H1 (cell line): ENCODE measurements at regions of chr3 and their contacts with region 1.

Region 1: DNA sequence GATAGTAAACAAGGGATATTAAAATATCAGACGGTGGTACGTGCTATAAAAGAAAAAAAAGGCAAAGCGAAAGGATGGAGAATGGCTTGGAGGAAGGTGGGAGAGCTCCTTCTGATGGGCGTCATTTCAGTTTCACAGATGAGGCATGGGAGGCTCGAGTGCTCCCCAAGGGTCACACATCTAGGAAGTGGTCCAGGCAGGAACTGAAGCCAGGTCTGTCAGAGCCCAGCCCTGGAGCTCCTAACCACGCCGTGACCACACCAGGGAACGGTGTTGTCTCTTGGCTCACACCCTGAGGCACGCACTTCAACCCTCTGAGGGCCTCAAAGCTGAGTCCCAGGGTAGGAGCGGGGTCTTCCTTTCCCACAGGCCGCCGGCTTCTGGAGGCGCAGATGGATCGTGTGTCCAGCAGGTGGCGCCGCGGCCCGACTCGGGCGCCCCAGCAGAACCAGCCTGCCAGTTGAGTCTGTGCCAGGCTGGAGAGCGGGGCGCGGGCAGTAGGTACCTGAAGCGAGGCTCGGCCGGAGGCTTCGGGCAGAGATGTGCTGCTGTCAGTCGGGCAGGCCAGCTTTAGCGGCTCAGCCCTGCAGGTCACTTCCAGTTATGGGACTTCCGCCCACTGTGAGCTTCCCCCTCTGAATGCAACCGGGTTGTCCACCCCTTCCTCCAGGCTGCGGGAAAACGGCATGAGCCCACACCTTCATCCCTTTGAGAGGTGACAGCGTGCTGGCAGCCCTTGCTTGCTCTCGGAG is 68.1 kb downstream of the SLC6A1 start:
- DNase-seq: peak in 1 of 2 experiments; percentile 89
- H3K4me3 ChIP-seq: peak overlapping the region; percentile 4 to 57 (median 35); a peak in 7 of 8 replicates
- H3K27ac ChIP-seq: no peak overlapping the region
- H3K4me1 ChIP-seq: peaks cover 0 to 6% (median 1%) of the 10 kb centered on the region in 4 experiments; a peak in 2 of 7 replicates
- H3K27me3 ChIP-seq: peaks cover 9 to 21% (median 14%) of the 10 kb centered on the region in 4 experiments; a peak in 6 of 7 replicates
- CTCF ChIP-seq: peak; percentile 84 to 93 (median 85)
- EP300 ChIP-seq: no peak
- POLR2A ChIP-seq: no peak
- RAD21 ChIP-seq: peak; percentile 73 to 84

Region 2: GRCh38 chr3:10835406-10835805 is 225.3 kb before region 1 on chr3:
- CTCF ChIA-PET with region 1: interaction called, 18 read pairs
- POLR2A ChIA-PET with region 1: no interaction called
- DNase-seq: peak in 1 of 2 experiments; percentile 49
- H3K4me3 ChIP-seq: no peak overlapping the region
- H3K27ac ChIP-seq: no peak overlapping the region
- H3K4me1 ChIP-seq: peaks cover 0 to 2% (median 0%) of the 10 kb centered on the region in 4 experiments; a peak in 1 of 7 replicates
- H3K27me3 ChIP-seq: no peaks in the 10 kb centered on the region; a peak in 1 of 7 replicates
- CTCF ChIP-seq: peak; percentile 56 to 68 (median 59)
- EP300 ChIP-seq: no peak
- POLR2A ChIP-seq: no peak
- RAD21 ChIP-seq: peak; percentile 48 to 65

Region 3: DNA sequence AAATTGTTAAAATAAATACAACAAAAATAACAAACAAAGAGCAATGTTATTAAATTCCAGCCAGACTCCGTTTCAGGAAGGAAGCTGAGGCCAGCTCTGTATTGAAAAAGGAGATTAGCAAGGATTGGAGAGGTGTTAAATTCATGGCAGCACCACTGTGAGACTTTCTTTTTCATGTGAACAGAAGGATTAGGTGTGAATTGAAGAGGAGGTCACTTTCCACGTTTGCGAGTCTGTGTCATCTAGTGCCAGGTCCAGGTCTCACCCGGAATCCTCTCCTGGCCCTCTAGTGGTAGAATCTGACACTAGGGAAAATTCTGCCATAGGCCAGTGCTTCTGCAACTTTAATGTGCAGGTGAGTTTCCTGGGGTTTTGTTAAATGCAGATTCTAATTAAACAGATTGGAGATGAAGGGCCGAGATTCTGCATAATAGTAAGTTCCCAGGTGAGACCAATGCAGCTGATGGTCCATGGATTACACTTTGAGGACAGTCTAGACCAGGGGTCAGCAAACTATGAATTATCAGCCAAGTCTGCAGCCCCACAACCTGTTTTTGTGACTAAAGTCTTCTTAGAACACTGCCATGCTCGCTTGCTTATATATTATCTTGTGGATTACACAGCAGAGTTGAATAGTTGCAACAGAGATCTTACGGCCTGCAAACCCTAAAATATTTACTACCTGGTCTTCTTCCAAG is 77.3 kb before region 1 on chr3:
- CTCF ChIA-PET with region 1: interaction called, 24 read pairs
- POLR2A ChIA-PET with region 1: no interaction called
- DNase-seq: peak in 1 of 2 experiments; percentile 60
- H3K4me3 ChIP-seq: no peak overlapping the region
- H3K27ac ChIP-seq: no peak overlapping the region
- H3K4me1 ChIP-seq: peaks cover 0 to 6% (median 3%) of the 10 kb centered on the region in 4 experiments; a peak in 5 of 7 replicates
- H3K27me3 ChIP-seq: no peaks in the 10 kb centered on the region
- CTCF ChIP-seq: peak; percentile 68 to 83 (median 76)
- EP300 ChIP-seq: no peak
- POLR2A ChIP-seq: no peak
- RAD21 ChIP-seq: peak; percentile 52 to 64

Region 4: GRCh38 chr3:11021611-11022011 is 39.1 kb before region 1 on chr3:
- CTCF ChIA-PET with region 1: interaction called, 12 read pairs
- POLR2A ChIA-PET with region 1: no interaction called
- DNase-seq: peak in 1 of 2 experiments; percentile 54
- H3K4me3 ChIP-seq: no peak overlapping the region
- H3K27ac ChIP-seq: no peak overlapping the region
- H3K4me1 ChIP-seq: no peaks in the 10 kb centered on the region
- H3K27me3 ChIP-seq: peaks cover 0 to 6% (median under 1%) of the 10 kb centered on the region in 4 experiments; a peak in 2 of 7 replicates
- CTCF ChIP-seq: peak; percentile 32 to 63 (median 52)
- EP300 ChIP-seq: no peak
- POLR2A ChIP-seq: no peak
- RAD21 ChIP-seq: peak; percentile 55 to 61

Region 5: DNA sequence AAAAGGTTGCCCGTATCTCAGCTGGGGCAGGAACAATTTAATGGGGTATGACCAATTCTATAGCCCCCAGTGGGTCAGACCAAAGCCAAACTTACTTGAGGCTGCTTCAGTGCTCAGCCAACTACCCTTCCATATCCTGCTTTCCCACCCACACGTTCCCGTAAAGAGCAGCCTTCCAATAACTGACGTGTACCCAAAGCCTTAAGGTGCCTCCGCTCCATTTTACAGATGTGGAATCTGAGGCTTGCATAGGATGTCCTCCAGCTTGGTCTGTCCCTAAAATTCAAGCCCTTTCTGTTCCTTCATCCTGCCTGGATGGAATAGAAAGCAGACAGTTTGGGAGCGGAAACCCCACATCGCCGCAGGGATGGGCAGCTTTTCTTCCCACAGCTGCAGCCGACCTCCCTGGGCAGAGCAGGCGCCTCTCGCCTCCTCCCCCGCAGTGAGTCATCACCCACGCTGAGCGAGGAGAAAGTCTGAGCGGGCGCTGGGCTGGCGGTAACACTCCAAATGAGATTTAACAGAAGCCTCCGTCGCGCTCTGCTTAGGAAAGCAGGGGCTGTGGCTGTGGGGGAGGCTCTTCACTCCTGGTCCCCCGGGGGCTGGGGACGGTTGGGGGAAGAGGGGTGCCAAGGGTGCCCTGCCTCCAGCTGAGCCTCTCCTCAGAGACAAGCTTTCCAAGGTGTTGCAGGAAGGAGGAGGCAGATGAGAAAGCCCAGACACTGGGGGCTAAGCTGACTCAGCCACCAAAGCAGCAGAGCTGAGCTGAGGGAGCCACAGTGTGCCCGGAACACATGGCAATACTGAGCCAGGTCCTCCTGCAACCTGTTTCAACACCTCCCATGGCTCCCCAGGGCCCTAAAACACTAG is 35.8 kb after region 1 on chr3:
- CTCF ChIA-PET with region 1: interaction called, 76 read pairs
- POLR2A ChIA-PET with region 1: no interaction called
- DNase-seq: peak in 1 of 2 experiments; percentile 55
- H3K4me3 ChIP-seq: peak overlapping the region; percentile 7 to 48 (median 26); a peak in 5 of 8 replicates
- H3K27ac ChIP-seq: no peak overlapping the region
- H3K4me1 ChIP-seq: peaks cover 0 to 8% (median 4%) of the 10 kb centered on the region in 4 experiments; a peak in 6 of 7 replicates
- H3K27me3 ChIP-seq: peaks cover 0 to 3% (median 0%) of the 10 kb centered on the region in 4 experiments; a peak in 2 of 7 replicates
- CTCF ChIP-seq: no peak
- EP300 ChIP-seq: no peak
- POLR2A ChIP-seq: no peak
- RAD21 ChIP-seq: no peak

Region 6: GRCh38 chr3:11168881-11169805 is 108.5 kb after region 1 on chr3:
- CTCF ChIA-PET with region 1: interaction called, 13 read pairs
- POLR2A ChIA-PET with region 1: no interaction called
- DNase-seq: no peak
- H3K4me3 ChIP-seq: no peak overlapping the region
- H3K27ac ChIP-seq: no peak overlapping the region
- H3K4me1 ChIP-seq: no peaks in the 10 kb centered on the region; a peak in 1 of 7 replicates
- H3K27me3 ChIP-seq: no peaks in the 10 kb centered on the region; a peak in 1 of 7 replicates
- CTCF ChIP-seq: no peak
- EP300 ChIP-seq: no peak
- POLR2A ChIP-seq: no peak
- RAD21 ChIP-seq: no peak

Region 7: GRCh38 chr3:12273045-12273695 is 1212.5 kb after region 1 on chr3:
- CTCF ChIA-PET with region 1: no interaction called
- POLR2A ChIA-PET with region 1: no interaction called
- DNase-seq: no peak
- H3K4me3 ChIP-seq: no peak overlapping the region
- H3K27ac ChIP-seq: no peak overlapping the region
- H3K4me1 ChIP-seq: no peaks in the 10 kb centered on the region
- H3K27me3 ChIP-seq: no peaks in the 10 kb centered on the region
- CTCF ChIP-seq: no peak
- EP300 ChIP-seq: no peak
- POLR2A ChIP-seq: no peak
- RAD21 ChIP-seq: no peak